MCF 10A (cell line): ENCODE measurements at regions of chr4 and their contacts with region 1.

Region 1: GRCh38 chr4:67332627-67333026 is 212.7 kb downstream of the CENPC start:
- DNase-seq: peak; percentile 33
- H3K4me3 Mint-ChIP-seq: no peak overlapping the region
- H3K27ac Mint-ChIP-seq: no peak overlapping the region
- H3K4me1 Mint-ChIP-seq: peaks cover 14% of the 10 kb centered on the region
- H3K27me3 Mint-ChIP-seq: peaks cover 15% of the 10 kb centered on the region
- CTCF ChIP-seq: peak; percentile 27

Region 2: DNA sequence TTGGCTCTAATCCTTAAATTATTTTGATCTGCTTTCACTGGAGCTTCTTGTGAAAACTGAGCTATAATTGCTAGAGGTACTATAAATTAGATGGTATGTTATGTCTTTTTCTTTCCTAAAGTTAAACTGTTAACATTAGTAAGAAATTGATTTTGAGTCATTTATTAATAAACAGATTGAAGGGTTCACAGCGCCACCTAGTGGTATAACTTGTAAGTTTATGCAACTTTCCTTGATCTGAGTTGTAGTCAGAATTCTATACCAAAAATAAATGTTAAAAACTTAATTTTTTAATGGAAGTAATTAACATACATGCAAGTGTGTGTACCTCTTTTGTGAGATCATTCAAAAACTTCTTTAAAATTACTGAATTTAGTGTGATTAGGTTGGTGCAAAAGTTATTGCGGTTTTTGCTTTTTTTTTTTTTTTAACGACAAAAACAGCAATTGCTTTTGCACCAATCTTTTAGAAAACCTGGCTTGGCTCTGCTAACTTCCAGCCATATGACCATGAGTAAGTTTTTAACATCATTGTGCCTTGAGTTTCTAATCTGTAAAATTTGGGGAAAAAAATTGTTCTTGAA is 61.2 kb after region 1 on chr4:
- CTCF ChIA-PET with region 1: interaction called, 18 read pairs
- POLR2A ChIA-PET with region 1: interaction called, 3 read pairs
- intact Hi-C with region 1: loop called (anchors 5 kb)
- DNase-seq: peak; percentile 53
- H3K4me3 Mint-ChIP-seq: no peak overlapping the region
- H3K27ac Mint-ChIP-seq: no peak overlapping the region
- H3K4me1 Mint-ChIP-seq: peaks cover 5% of the 10 kb centered on the region
- H3K27me3 Mint-ChIP-seq: peaks cover 12% of the 10 kb centered on the region
- CTCF ChIP-seq: peak; percentile 57